Panc1 (cell line): ENCODE measurements at regions of chr2 and their contacts with region 1.

Region 1: GRCh38 chr2:100043891-100044255 is 98.5 kb downstream of the AFF3 start:
- DNase-seq: no peak
- ATAC-seq: no peak
- H3K4me3 ChIP-seq: no peak overlapping the region
- H3K27ac ChIP-seq: no peak overlapping the region
- H3K4me1 ChIP-seq: no peaks in the 10 kb centered on the region
- H3K27me3 ChIP-seq: peaks cover 8% of the 10 kb centered on the region
- CTCF ChIP-seq: no peak

Region 2: DNA sequence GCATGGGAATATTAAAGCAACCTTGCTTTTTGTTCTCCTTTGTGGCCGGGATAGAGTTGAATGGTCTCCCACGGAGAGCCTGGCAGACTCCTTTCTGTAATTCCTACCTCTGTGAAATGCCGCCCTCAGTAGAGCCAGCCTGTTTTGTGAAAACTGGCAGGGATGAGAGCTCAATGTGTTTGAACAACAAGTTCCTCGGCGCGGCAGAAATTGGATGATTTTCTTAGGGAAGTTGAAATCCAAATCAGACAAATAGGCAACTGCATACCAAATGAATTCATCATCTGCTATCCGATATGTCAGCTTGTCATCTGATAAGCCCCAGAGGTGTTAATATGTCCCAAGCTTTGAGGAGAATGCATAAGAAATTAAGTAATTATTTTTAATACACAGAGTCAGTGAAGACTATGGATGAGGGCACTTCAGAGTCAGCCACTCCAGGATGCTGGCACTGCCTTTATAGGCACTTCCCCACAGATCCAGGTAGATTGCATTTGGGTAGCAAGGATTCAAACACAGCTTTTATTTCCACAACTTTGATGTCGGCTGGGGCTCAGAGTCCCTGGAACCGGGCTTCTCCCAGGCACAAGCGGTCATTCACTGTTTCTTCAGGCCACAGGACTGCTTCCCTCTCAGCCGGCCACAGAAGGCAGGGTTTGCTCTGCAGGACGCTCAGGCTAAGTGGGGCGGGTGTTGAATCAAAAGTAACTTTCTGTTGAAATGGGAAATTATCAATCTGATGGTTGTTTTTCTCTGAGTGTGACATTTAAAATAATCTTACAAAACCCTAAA is 471.3 kb before region 1 on chr2:
- CTCF ChIA-PET with region 1: no interaction called
- POLR2A ChIA-PET with region 1: no interaction called
- in situ Hi-C with region 1: no loop called
- intact Hi-C with region 1: no loop called
- DNase-seq: no peak
- ATAC-seq: no peak
- H3K4me3 ChIP-seq: no peak overlapping the region
- H3K27ac ChIP-seq: no peak overlapping the region
- H3K4me1 ChIP-seq: no peaks in the 10 kb centered on the region
- H3K27me3 ChIP-seq: no peaks in the 10 kb centered on the region; the same call in 1 of the 2 replicates
- CTCF ChIP-seq: no peak

Region 3: GRCh38 chr2:99998651-99999320 is 45.1 kb before region 1 on chr2:
- CTCF ChIA-PET with region 1: no interaction called
- POLR2A ChIA-PET with region 1: no interaction called
- in situ Hi-C with region 1: no loop called
- intact Hi-C with region 1: no loop called
- DNase-seq: no peak
- ATAC-seq: no peak
- H3K4me3 ChIP-seq: no peak overlapping the region
- H3K27ac ChIP-seq: no peak overlapping the region
- H3K4me1 ChIP-seq: no peaks in the 10 kb centered on the region
- H3K27me3 ChIP-seq: no peaks in the 10 kb centered on the region; the same call in 1 of the 2 replicates
- CTCF ChIP-seq: no peak

Region 4: GRCh38 chr2:100283724-100284501 is 240.0 kb after region 1 on chr2:
- CTCF ChIA-PET with region 1: no interaction called
- POLR2A ChIA-PET with region 1: interaction called, 11 read pairs
- in situ Hi-C with region 1: no loop called
- intact Hi-C with region 1: no loop called
- DNase-seq: no peak
- ATAC-seq: peak; percentile 86
- H3K4me3 ChIP-seq: no peak overlapping the region
- H3K27ac ChIP-seq: peak overlapping the region; percentile 35
- H3K4me1 ChIP-seq: peaks cover 17% of the 10 kb centered on the region
- H3K27me3 ChIP-seq: no peaks in the 10 kb centered on the region
- CTCF ChIP-seq: no peak